ENCODE measurements at regions of chr2 and their contacts with region 1.

Region 1: DNA sequence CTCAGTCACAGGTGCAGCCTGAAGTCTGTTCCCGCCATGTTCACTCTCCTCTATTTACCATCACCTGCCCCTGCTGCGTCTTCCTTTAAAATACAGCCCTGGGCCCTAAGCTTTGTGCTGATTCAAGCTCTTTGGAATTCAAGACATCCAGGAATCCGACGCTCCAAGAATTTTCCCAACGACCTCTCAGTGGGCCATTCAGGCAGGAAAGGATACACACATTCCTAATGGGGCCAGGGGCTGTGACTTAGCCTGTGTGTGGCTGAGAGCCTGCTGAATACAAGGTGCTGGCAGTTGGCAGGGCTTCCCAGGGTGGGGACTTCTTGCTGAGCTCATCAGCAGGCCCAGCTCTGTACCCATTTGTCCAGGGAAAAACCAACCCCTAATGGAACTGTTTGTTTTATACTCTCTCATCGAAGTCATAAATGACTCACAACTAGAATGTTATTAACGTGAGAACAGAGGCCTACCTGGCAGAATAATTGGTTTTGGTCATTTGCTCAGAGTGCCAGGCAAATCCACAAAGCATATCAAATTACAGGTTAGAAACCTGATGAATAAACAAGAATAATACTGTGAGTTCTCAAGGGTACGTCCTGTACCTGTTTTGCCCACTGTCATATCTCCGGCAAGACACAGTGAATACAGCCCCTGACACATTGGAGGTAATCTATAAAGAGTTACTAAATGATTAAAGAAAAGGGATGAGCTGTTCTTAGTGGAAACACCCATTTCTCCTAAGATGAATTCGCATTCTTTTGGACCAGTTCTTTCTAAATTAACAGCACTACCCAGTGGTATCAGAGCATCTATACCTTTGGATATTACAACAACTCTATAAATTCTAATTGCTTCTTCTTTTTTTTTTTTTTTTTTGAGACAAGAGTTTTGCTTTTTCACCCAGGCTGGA is 12.6 kb upstream of the KCMF1 start:
- DNase-seq: no peak
- ATAC-seq: no peak
- H3K4me3 ChIP-seq: no peak overlapping the region
- H3K4me3 Mint-ChIP-seq: no peak overlapping the region
- H3K27ac ChIP-seq: no peak overlapping the region
- H3K27ac Mint-ChIP-seq: peak overlapping the region in 1 of 2 donors; percentile 39
- H3K4me1 ChIP-seq: no peaks in the 10 kb centered on the region
- H3K4me1 Mint-ChIP-seq: peaks cover 6 to 28% (median 14%) of the 10 kb centered on the region in 3 donors
- H3K27me3 ChIP-seq: no peaks in the 10 kb centered on the region
- H3K27me3 Mint-ChIP-seq: no peaks in the 10 kb centered on the region

Region 2: GRCh38 chr2:84459018-84459943 is 499.1 kb before region 1 on chr2 and contains the start of gene SUCLG1:
- CTCF ChIA-PET with region 1: no interaction called
- POLR2A ChIA-PET with region 1: interaction called in 1 of 2 experiments, 13 read pairs
- DNase-seq: peak; percentile 73 to 91 (median 81)
- ATAC-seq: peak; percentile 95 to 98 (median 98)
- H3K4me3 ChIP-seq: peak within 1 kb of the TSS; percentile 70 to 86
- H3K4me3 Mint-ChIP-seq: peak within 1 kb of the TSS; percentile 89 to 100 (median 94)
- H3K27ac ChIP-seq: peak within 1 kb of the TSS; percentile 93
- H3K27ac Mint-ChIP-seq: peak within 1 kb of the TSS; percentile 94 to 99
- H3K4me1 ChIP-seq: peaks cover 16 to 17% of the 10 kb centered on the region in 2 experiments
- H3K4me1 Mint-ChIP-seq: peaks cover 50 to 61% (median 51%) of the 10 kb centered on the region in 3 donors
- H3K27me3 ChIP-seq: no peaks in the 10 kb centered on the region
- H3K27me3 Mint-ChIP-seq: no peaks in the 10 kb centered on the region
- total RNA-seq, gene SUCLG1: 38.9 to 49.3 (median 46.9) TPM

Region 3: GRCh38 chr2:84815146-84815545 is 143.2 kb before region 1 on chr2:
- CTCF ChIA-PET with region 1: no interaction called
- POLR2A ChIA-PET with region 1: interaction called, 4 to 10 read pairs
- DNase-seq: no peak
- ATAC-seq: no peak
- H3K4me3 ChIP-seq: no peak overlapping the region
- H3K4me3 Mint-ChIP-seq: no peak overlapping the region
- H3K27ac ChIP-seq: no peak overlapping the region
- H3K27ac Mint-ChIP-seq: peak overlapping the region in 1 of 2 donors; percentile 73
- H3K4me1 ChIP-seq: peaks cover 10 to 20% of the 10 kb centered on the region in 2 experiments
- H3K4me1 Mint-ChIP-seq: peaks cover 53 to 65% (median 60%) of the 10 kb centered on the region in 3 donors
- H3K27me3 ChIP-seq: no peaks in the 10 kb centered on the region
- H3K27me3 Mint-ChIP-seq: no peaks in the 10 kb centered on the region

Region 4: DNA sequence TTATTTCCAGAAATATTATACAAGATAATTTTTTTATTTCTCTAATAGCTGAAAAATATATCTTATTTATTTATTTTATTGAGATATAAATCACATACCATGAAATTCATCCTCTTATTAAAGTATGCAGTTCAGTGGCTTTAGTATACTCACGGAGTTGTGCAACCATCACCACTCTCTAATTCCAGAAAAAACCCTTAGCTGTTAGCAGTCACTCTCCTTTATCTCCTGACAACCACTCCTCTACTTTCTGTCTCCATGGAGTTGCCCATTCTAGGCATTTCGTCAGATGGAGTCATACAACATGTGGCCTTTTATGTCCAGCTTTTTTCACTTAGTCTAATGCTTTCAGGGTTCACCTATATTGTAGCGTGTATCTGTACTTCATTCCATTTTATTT is 241.3 kb after region 1 on chr2:
- CTCF ChIA-PET with region 1: no interaction called
- POLR2A ChIA-PET with region 1: no interaction called
- DNase-seq: no peak
- ATAC-seq: no peak
- H3K4me3 ChIP-seq: no peak overlapping the region
- H3K4me3 Mint-ChIP-seq: no peak overlapping the region
- H3K27ac ChIP-seq: no peak overlapping the region
- H3K27ac Mint-ChIP-seq: no peak overlapping the region
- H3K4me1 ChIP-seq: no peaks in the 10 kb centered on the region
- H3K4me1 Mint-ChIP-seq: no peaks in the 10 kb centered on the region
- H3K27me3 ChIP-seq: peaks cover 0 to 16% of the 10 kb centered on the region in 2 experiments
- H3K27me3 Mint-ChIP-seq: peaks cover 9 to 14% of the 10 kb centered on the region in 2 donors

Region 5: DNA sequence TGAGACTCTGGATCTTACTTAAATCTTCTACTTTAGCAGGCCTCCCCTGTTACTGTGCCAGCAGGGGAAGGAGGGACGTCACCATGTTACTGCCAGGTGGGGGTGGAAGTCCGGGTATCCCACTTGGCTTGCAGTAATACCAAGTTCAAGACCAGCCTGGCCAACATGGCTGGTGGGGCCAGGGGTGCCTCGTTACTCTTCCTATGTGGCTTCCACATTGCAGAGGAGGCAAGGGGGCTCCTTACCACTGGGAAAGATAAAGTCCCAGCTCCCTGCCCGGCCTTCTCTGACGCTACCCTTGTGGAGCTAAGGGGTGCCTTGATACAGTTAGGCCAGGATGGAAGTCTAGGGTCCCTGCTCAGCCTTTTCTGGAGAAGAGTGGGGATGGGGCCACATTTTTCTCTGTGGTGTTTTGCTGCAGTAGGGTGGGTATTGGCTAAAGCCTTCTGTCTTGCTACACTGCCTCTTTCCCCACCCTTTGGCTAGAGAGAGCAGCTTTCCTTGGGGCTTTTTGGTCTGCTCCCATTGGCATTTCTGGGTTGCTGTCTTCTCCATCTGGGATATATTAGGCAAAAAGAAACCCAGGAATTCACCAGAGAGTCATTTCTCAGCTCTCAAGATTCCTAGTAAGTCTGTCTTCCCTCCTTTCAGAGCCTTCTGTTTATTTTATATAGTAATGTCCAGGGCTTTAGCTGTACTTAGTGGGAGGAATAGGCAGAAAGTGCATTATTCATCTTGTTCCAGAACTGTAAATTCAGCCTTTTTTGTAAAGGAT is 418.1 kb after region 1 on chr2:
- CTCF ChIA-PET with region 1: no interaction called
- POLR2A ChIA-PET with region 1: no interaction called
- DNase-seq: no peak
- ATAC-seq: no peak
- H3K4me3 ChIP-seq: no peak overlapping the region
- H3K4me3 Mint-ChIP-seq: no peak overlapping the region
- H3K27ac ChIP-seq: no peak overlapping the region
- H3K27ac Mint-ChIP-seq: no peak overlapping the region
- H3K4me1 ChIP-seq: no peaks in the 10 kb centered on the region
- H3K4me1 Mint-ChIP-seq: no peaks in the 10 kb centered on the region
- H3K27me3 ChIP-seq: no peaks in the 10 kb centered on the region
- H3K27me3 Mint-ChIP-seq: no peaks in the 10 kb centered on the region

Region 6: DNA sequence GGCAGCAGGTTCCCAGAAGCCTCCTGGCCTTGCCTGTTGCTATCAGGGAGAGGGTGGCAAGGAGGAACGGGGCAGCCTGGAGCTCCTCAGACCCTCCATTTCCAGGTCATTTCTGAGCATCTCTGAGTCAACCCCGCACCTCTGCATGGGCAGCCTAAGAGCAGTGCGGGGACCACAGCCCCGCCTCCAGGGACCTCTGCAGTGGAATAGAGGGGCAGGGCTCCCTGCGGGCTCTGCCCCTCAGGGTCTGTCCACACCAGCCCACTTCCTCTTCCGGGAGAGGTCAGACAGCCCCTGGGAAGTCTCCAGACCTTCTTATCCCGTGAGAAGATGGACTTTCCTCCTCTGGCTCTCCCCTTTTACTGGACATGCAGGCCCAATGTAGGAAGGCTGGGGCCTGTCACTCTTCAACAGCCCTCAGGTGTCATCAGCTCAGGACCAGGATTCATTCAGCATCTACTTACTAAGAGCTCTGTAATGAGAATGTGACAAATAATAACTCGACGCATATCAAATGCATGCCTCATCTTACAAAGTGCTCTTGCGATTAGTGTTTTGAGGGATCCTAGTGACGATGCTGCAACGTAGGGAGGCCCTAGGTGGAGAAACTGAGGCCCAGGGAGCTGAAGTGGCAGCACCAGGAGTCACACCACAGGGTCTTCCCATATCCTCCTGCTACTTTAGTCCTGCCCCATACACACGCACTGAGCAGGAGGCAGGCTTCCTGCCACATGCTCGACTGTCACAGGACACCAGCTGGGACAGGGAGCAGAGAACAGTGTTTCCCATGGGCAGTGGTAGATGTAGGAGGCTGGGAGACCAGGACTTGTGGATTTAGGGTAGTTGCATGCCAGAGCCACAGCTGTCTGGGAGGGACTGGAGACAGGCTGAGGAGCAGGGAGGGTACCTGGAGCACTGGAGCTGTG is 488.2 kb after region 1 on chr2:
- CTCF ChIA-PET with region 1: no interaction called
- POLR2A ChIA-PET with region 1: no interaction called
- DNase-seq: no peak
- ATAC-seq: no peak
- H3K4me3 ChIP-seq: no peak overlapping the region
- H3K4me3 Mint-ChIP-seq: no peak overlapping the region
- H3K27ac ChIP-seq: no peak overlapping the region
- H3K27ac Mint-ChIP-seq: no peak overlapping the region
- H3K4me1 ChIP-seq: no peaks in the 10 kb centered on the region
- H3K4me1 Mint-ChIP-seq: no peaks in the 10 kb centered on the region
- H3K27me3 ChIP-seq: no peaks in the 10 kb centered on the region
- H3K27me3 Mint-ChIP-seq: no peaks in the 10 kb centered on the region

Measured in T-cell (primary cell).